ENCODE measurements at regions of chr1 and their contacts with region 1.

Region 1: DNA sequence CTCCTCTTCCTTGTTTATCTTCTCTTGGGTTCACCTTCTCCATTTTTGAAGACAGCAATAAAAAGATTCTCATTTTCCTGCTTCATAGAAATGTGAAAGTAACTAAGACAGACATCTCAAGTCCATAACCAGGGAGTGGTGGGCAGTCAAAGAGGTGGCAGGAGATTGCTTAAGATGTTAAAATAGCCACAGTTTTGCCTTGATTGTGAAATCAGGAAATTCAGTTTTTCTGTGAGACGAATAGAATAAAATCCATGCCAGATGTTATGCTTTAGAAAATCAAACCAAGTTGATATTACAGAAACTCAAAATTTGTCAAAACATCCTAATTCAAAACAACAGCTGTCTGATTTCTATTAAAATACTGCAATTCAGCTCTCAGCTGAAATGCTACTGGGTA is 57.2 kb downstream of the TNN start:
- DNase-seq: no peak
- H3K4me3 ChIP-seq: no peak overlapping the region
- H3K27ac ChIP-seq: peak overlapping the region in 1 of 5 donors; percentile 10
- H3K4me1 ChIP-seq: no peaks in the 10 kb centered on the region
- H3K27me3 ChIP-seq: no peaks in the 10 kb centered on the region
- CTCF ChIP-seq: no peak
- POLR2A ChIP-seq: no peak

Region 2: GRCh38 chr1:175033953-175034352 is 90.9 kb before region 1 on chr1:
- intact Hi-C with region 1: loop called (anchors 5 kb)
- DNase-seq: no peak
- H3K4me3 ChIP-seq: no peak overlapping the region
- H3K27ac ChIP-seq: no peak overlapping the region
- H3K4me1 ChIP-seq: no peaks in the 10 kb centered on the region
- H3K27me3 ChIP-seq: no peaks in the 10 kb centered on the region
- CTCF ChIP-seq: no peak
- POLR2A ChIP-seq: no peak